PC-3 (cell line): ENCODE measurements at regions of chr2 and their contacts with region 1.

Region 1: DNA sequence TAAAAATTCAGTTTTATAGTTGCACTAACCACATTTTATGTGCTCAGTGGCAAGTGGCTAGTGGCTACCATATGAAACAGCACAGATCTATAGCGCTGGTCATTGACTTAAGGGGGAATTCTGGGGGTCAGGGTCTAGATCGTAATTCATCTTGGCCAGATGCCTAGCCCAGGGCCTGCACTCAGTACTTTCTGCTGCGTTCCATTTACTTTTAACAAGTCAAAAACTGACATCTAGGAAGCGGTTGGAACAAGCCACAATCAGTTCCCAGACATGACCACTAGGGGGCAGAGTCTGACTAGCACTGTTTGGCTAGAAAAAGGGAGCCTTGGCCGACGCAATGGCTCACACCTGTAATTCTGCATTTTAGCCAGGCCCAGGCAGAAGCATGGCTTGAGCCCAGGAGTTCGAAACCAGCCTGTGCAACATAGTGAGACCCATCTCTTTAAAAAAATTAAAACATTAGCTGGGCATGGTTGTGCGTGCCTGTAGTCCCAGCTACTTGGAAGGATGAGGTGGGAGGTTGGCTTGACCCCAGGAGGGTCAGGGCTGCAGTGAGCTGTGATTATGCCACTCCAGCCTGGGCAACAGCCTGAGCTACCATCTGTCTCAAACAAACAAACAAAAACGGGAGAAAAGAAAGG is 9.0 kb upstream of the TMBIM1 start:
- DNase-seq: peak; percentile 96
- ATAC-seq: peak; percentile 94
- H3K4me3 ChIP-seq: no peak overlapping the region
- H3K27ac ChIP-seq: no peak overlapping the region
- H3K4me1 ChIP-seq: no peaks in the 10 kb centered on the region
- H3K27me3 ChIP-seq: no peaks in the 10 kb centered on the region
- CTCF ChIP-seq: peak; percentile 93

Region 2: DNA sequence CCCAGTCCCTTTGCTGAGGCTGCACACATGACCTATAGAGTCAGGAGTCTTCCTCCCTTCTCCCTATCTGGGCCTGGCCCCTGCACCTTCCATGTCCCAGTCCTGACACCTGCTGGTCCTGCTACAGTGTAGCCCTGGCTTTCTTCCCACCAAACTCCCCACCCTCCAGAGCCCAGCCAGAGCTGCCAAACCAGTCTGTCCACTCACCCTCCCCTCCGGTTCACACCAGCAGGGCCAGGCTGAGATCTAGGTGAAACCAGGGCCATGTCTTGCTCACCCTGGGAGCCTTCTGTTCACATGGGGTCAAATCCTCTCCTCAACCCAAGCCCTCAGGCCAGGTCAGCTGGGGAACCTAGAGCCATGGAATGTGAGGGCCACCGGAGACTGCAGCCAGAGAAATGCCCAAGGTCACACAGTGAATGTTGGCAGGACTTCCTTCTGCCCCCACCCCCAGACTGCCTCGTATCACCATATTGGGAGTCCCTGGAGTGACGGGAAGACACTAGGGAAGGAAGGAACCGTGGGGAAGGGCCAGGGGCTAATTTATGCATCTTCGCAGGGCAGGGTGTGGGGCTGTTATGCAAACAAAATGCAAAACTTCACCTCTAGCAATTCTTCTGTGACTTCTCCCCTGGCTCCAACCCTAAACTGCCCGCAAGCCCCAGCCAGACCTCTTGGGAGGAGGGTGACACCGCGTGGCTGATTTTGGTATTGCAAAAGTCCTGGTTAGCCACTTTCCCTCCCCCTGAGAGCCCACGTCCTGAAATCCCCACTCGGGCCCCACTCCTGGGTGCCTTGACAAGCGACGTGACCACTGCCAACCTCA is 313.1 kb before region 1 on chr2:
- CTCF ChIA-PET with region 1: no interaction called
- POLR2A ChIA-PET with region 1: no interaction called
- intact Hi-C with region 1: no loop called
- DNase-seq: peak; percentile 91
- ATAC-seq: peak; percentile 75
- H3K4me3 ChIP-seq: peak overlapping the region; percentile 35; the same call in 1 of the 2 replicates
- H3K27ac ChIP-seq: no peak overlapping the region
- H3K4me1 ChIP-seq: peaks cover 7% of the 10 kb centered on the region
- H3K27me3 ChIP-seq: no peaks in the 10 kb centered on the region
- CTCF ChIP-seq: peak; percentile 76

Region 3: DNA sequence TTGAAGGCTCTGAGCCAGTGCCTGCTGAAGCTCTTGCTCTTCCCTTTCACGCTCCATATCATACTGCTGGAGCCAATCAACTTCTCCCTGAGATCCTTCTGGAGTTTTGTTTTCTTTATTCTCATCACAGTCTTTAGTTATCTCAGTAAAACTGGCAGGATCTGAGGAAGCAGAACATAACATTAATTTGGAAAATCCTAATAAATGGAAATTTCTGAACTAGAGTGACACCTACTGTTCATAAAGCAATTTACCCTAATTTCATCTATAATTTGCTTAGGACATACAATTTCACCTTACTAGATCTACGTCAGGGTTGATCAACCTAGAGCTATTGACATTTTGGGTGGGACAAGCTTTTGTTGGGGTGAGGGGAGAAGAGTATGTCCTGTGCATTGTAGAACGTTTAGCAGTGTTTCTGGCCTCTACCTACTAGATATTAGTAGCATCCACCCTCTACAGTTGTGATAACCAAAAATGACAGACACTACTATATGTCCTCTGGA is 164.8 kb after region 1 on chr2:
- CTCF ChIA-PET with region 1: no interaction called
- POLR2A ChIA-PET with region 1: no interaction called
- intact Hi-C with region 1: loop called (anchors 1 kb)
- DNase-seq: peak; percentile 60
- ATAC-seq: peak; percentile 54
- H3K4me3 ChIP-seq: no peak overlapping the region
- H3K27ac ChIP-seq: no peak overlapping the region
- H3K4me1 ChIP-seq: no peaks in the 10 kb centered on the region
- H3K27me3 ChIP-seq: no peaks in the 10 kb centered on the region
- CTCF ChIP-seq: peak; percentile 76